MCF 10A (cell line): ENCODE measurements at regions of chr3 and their contacts with region 1.

Region 1: DNA sequence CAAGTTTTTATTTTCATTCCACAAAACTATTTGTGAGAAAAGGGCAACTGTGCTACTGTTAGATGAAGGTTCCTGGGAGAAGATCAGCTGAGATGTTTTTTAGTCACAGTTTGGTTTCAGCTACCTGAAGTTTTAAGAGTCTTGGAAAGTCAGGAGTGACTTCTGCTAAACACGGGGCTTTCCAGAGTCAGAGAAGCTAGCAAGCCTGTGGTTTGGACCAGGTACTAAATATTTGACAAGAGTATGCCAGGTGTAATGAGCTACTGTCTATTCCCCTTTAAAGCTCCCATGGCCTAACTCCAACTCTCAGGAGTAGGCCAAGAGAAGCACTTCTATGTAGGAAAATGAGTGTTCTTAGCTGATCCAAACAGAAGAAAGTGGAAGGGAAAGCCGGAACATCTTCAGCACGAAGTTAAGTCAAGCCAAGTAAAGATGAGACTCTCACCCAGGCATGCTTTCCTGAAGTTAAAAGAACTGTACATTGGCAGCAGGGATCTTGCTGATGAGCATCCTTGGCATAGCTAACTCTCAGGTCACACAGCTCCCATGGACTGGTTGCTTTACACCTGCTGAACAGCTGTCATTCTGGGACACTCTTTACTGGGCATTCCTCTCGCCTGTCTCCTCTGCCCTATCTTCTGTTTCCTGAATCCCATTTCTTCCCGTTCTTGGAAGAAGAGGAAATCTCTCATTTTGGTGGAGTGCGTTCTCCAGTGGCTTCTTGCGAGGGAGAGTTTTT is 22.5 kb downstream of the TM4SF18 start:
- DNase-seq: peak; percentile 26
- H3K4me3 Mint-ChIP-seq: no peak overlapping the region
- H3K27ac Mint-ChIP-seq: peak overlapping the region; percentile 49
- H3K4me1 Mint-ChIP-seq: peaks cover 13% of the 10 kb centered on the region
- H3K27me3 Mint-ChIP-seq: no peaks in the 10 kb centered on the region
- CTCF ChIP-seq: no peak

Region 2: GRCh38 chr3:149330609-149331331 is 19.8 kb after region 1 on chr3:
- CTCF ChIA-PET with region 1: interaction called, 35 read pairs
- POLR2A ChIA-PET with region 1: interaction called, 4 read pairs
- intact Hi-C with region 1: no loop called
- DNase-seq: peak; percentile 29
- H3K4me3 Mint-ChIP-seq: no peak overlapping the region
- H3K27ac Mint-ChIP-seq: no peak overlapping the region
- H3K4me1 Mint-ChIP-seq: no peaks in the 10 kb centered on the region
- H3K27me3 Mint-ChIP-seq: no peaks in the 10 kb centered on the region
- CTCF ChIP-seq: no peak

Region 3: DNA sequence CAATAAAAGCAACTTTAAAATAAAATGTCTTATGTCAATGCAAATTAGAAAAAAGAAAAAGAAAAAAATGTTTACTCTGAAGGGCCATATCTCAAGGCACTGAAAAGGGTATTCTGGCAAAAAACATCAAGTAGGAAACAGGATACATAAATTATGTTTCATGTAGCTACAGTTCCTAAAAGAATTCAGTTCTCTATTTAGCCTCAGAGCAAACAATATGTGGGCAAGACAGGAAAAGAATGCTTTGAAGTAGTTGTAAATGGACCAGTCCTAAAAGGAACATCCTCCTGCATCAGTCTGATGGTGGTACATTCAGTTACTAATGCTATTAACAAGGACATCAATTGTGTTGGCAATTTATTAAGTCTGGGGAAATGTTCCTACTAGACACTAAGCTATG is 433.2 kb after region 1 on chr3:
- CTCF ChIA-PET with region 1: no interaction called
- POLR2A ChIA-PET with region 1: no interaction called
- intact Hi-C with region 1: no loop called
- DNase-seq: no peak
- H3K4me3 Mint-ChIP-seq: no peak overlapping the region
- H3K27ac Mint-ChIP-seq: no peak overlapping the region
- H3K4me1 Mint-ChIP-seq: no peaks in the 10 kb centered on the region
- H3K27me3 Mint-ChIP-seq: no peaks in the 10 kb centered on the region
- CTCF ChIP-seq: no peak